Activated CD4-positive, alpha-beta T cell treated with anti-CD3 and anti-CD28 coated beads for 36 hours (primary cell): ENCODE measurements at regions of chr5 and their contacts with region 1.

Region 1: GRCh38 chr5:62206150-62206829 is 99.7 kb upstream of the KIF2A start:
- DNase-seq: no peak
- ATAC-seq: no peak
- H3K4me3 Mint-ChIP-seq: no peak overlapping the region
- H3K27ac Mint-ChIP-seq: no peak overlapping the region
- H3K4me1 Mint-ChIP-seq: no peaks in the 10 kb centered on the region
- H3K27me3 Mint-ChIP-seq: peaks cover 32% of the 10 kb centered on the region

Region 2: DNA sequence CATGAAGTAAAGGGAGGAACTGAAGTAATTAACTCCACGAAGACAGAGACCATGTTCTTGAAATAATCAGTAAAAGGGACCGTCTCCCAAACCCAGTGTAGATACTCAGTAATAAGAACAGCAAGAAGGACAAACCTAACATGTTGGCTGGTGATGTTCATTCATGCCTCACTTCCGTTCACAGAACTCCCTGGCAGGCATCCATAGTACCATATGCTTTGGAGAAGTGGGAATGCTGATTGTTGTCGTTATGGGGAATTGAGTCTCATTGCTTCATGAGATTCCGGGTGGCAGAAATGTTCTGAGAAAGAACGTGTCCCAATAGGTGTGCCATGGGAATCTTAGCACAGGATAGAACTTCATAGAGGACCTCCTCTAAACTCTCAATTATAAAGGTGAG is 421.9 kb before region 1 on chr5:
- CTCF ChIA-PET with region 1: no interaction called
- POLR2A ChIA-PET with region 1: no interaction called
- intact Hi-C with region 1: no loop called
- DNase-seq: no peak
- ATAC-seq: no peak
- H3K4me3 Mint-ChIP-seq: no peak overlapping the region
- H3K27ac Mint-ChIP-seq: no peak overlapping the region
- H3K4me1 Mint-ChIP-seq: no peaks in the 10 kb centered on the region
- H3K27me3 Mint-ChIP-seq: peaks cover 3% of the 10 kb centered on the region

Region 3: DNA sequence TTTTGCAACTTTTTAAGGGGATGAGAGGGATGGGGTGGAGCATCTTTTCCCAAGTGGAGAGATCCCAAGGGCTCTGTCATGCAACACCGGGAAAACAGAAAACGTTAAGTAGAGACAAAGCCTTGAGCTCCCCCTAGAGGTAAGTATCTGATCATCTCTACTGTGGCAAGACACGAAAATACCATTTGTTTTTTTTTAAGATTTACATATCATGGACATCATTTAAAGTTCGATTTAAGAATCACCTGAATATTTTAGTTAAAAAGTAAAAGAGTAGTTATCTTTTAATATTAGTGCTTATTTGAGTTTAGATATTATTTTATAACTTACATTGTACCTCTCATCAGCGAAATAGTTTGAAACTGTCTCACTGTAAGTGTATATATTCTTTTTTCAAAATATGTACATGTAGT is 572.7 kb after region 1 on chr5:
- CTCF ChIA-PET with region 1: no interaction called
- POLR2A ChIA-PET with region 1: no interaction called
- intact Hi-C with region 1: loop called (anchors 10 kb)
- DNase-seq: no peak
- ATAC-seq: no peak
- H3K4me3 Mint-ChIP-seq: no peak overlapping the region
- H3K27ac Mint-ChIP-seq: no peak overlapping the region
- H3K4me1 Mint-ChIP-seq: peaks cover 5% of the 10 kb centered on the region
- H3K27me3 Mint-ChIP-seq: peaks cover 4% of the 10 kb centered on the region